HAP-1 (cell line): ENCODE measurements at regions of chr3 and their contacts with region 1.

Region 1: GRCh38 chr3:63349583-63350521 is 71.7 kb downstream of the SYNPR start:
- DNase-seq: peak; percentile 19 to 65
- H3K4me3 ChIP-seq: no peak overlapping the region
- H3K4me1 ChIP-seq: no peaks in the 10 kb centered on the region
- H3K27me3 ChIP-seq: peaks cover 16% of the 10 kb centered on the region; the same call in 1 of the 2 replicates

Region 2: GRCh38 chr3:62546266-62546665 is 803.6 kb before region 1 on chr3:
- in situ Hi-C with region 1: no loop called
- DNase-seq: no peak
- H3K4me3 ChIP-seq: no peak overlapping the region
- H3K4me1 ChIP-seq: peaks cover 19% of the 10 kb centered on the region
- H3K27me3 ChIP-seq: no peaks in the 10 kb centered on the region

Region 3: DNA sequence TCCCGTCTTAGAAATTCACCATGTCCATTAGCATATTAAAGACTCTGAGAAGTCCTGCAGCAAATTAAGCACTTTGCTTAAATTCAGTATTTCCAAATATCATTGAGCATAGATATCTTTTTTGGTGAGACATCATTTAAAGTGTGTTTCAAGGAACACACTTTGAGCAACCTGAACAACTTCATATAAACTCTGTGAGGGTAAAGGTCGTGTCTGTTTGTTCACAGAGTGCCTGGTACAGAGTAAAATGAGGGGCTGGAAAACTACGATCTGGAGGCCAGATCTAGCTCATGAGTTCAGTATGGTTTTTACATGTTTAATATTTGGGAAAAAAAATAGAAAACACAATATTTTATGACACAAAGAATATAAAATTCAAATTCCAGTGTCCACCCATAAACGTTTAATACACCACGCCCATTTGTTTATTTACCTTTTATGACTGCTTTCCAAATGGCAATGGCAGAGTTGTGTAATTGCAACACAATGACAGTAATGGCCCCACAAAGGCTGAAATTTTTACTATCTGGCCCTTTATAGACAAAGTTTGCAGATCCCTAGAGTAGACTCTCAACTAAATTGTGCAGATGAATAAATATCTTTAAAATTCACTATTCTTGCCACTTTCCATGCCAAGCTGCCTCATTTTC is 370.1 kb after region 1 on chr3:
- in situ Hi-C with region 1: no loop called
- DNase-seq: no peak
- H3K4me3 ChIP-seq: no peak overlapping the region
- H3K4me1 ChIP-seq: no peaks in the 10 kb centered on the region
- H3K27me3 ChIP-seq: no peaks in the 10 kb centered on the region

Region 4: DNA sequence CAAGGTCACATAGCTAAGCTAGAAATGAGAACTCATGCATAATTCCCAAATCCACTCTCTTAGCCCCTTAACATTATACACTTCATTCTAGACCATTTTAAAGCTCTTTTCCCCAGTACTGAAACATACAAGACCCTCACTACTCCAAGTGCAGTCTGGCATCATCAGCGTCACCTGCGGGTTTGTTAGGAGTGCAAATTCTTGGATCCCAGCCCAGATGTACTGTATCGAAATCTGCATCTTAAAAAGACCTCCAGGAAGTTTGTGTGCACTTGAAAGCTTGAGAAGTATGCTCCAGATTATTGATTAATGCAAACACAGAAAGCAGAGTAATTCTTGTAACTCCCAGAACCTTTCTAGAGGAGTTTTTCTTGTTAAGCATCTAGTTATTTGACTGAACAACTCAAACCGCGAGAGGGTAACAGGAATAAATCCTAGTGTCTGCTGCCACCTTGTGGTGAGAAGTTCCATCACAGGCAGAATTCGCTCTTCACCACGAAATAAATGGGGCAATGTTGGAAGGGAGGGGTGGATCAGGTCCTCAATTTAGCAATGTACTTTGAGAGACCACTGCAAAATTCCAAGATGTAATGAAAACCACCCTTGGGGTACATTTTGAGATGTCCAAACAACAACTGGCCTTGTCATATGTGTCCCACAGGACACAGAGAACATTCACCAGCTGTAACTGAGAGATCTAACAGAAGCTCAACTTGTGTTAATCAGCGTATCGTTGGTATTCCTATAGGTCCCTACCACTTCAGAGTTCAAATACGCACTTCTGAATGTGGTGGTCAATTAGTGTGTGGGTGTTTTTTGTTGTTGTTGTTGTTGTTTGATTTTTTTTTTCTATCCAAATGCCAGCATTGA is 468.7 kb after region 1 on chr3:
- in situ Hi-C with region 1: loop called (anchors 5 kb)
- DNase-seq: peak; percentile 59 to 71
- H3K4me3 ChIP-seq: no peak overlapping the region
- H3K4me1 ChIP-seq: peaks cover 4% of the 10 kb centered on the region
- H3K27me3 ChIP-seq: no peaks in the 10 kb centered on the region

Region 5: GRCh38 chr3:63993653-63994079 is 643.8 kb after region 1 on chr3:
- in situ Hi-C with region 1: loop called (anchors 10 kb)
- DNase-seq: peak; percentile 68 to 72
- H3K4me3 ChIP-seq: no peak overlapping the region
- H3K4me1 ChIP-seq: no peaks in the 10 kb centered on the region
- H3K27me3 ChIP-seq: no peaks in the 10 kb centered on the region